GM12878 (cell line): ENCODE measurements at regions of chr13 and their contacts with region 1.

Region 1: GRCh38 chr13:44710576-44710975 is 134.4 kb upstream of the TSC22D1 start:
- DNase-seq: peak; percentile 5
- ATAC-seq: peak; percentile 90
- H3K4me3 ChIP-seq: no peak overlapping the region
- H3K27ac ChIP-seq: no peak overlapping the region
- H3K4me1 ChIP-seq: peaks cover 6% of the 10 kb centered on the region
- H3K27me3 ChIP-seq: no peaks in the 10 kb centered on the region
- CTCF ChIP-seq: no peak
- EP300 ChIP-seq: no peak
- POLR2A ChIP-seq: no peak
- RAD21 ChIP-seq: no peak

Region 2: DNA sequence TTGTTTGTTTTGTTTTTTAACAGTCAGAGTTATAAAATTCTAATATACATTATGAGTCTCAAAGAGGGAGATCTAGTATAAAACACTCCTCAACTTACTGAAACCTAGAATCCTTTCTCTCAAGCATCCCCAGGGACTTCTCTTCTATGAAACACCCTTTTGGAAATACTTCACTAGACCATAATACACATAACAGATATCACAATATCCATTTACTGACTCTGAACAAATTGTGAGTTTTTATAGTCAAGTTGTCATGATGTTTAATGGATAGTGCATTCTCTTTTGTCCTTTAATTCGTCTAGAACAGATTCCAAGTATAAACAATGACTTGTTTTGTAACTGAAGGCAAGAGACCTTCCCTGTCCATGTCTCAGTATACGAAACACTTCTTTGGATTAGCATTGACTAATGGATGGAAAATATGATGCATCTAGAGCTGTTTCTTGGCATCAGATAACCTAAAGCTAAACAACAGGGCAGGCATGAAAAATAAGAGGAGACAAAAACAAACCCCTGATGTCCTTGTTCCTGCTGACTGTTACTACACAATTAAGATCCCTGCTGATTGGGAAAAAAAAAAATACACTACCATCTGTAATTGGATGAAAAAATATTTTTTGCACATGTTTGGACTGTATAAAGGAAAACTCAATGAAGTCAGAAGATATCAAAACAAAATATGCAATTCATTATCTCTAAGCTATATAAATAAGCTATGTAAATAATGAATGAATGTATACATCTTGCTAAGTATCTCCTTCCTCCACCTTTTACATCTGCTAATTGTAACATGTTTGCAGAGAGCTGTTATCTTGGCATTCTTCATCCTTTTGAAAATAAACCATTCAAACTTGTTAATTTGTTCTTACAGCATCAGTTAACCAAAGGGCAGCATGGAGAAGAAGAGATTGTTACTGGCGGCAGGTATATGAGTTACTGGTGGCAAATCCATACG is 616.7 kb before region 1 on chr13:
- CTCF ChIA-PET with region 1: no interaction called
- POLR2A ChIA-PET with region 1: no interaction called
- RAD21 ChIA-PET with region 1: no interaction called
- SMC1A ChIA-PET with region 1: no interaction called
- in situ Hi-C with region 1: no loop called
- intact Hi-C with region 1: no loop called
- DNase-seq: no peak
- ATAC-seq: no peak
- H3K4me3 ChIP-seq: no peak overlapping the region
- H3K27ac ChIP-seq: no peak overlapping the region
- H3K4me1 ChIP-seq: peaks cover 3% of the 10 kb centered on the region; the same call in 1 of the 2 replicates
- H3K27me3 ChIP-seq: no peaks in the 10 kb centered on the region; a peak in 1 of 4 replicates
- CTCF ChIP-seq: no peak
- EP300 ChIP-seq: no peak
- POLR2A ChIP-seq: no peak
- RAD21 ChIP-seq: no peak

Region 3: DNA sequence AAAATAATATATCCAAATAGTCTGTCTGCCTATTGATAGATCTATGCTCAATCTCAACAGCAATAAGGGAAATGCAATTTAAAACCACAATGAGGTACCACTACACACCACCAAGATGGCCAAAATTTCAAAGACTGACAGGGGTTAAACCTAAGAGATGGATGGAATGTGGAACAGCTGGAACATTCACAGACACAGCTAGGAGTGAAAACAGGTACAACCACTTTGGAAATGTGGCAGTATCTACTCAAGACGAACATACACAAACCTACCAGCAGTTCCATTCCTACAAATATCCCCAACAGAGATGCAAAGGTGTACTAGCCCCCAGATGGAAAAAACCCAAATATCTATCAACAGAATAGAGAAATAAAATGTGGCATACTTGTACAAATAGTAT is 220.8 kb before region 1 on chr13:
- CTCF ChIA-PET with region 1: no interaction called
- POLR2A ChIA-PET with region 1: no interaction called
- RAD21 ChIA-PET with region 1: interaction called, 3 read pairs
- SMC1A ChIA-PET with region 1: no interaction called
- in situ Hi-C with region 1: no loop called
- intact Hi-C with region 1: loop called (anchors 5 kb)
- DNase-seq: no peak
- ATAC-seq: no peak
- H3K4me3 ChIP-seq: no peak overlapping the region
- H3K27ac ChIP-seq: no peak overlapping the region
- H3K4me1 ChIP-seq: no peaks in the 10 kb centered on the region; the same call in 1 of the 2 replicates
- H3K27me3 ChIP-seq: no peaks in the 10 kb centered on the region
- CTCF ChIP-seq: no peak
- EP300 ChIP-seq: no peak
- POLR2A ChIP-seq: no peak
- RAD21 ChIP-seq: no peak